Vagina (tissue), 2 donors: ENCODE measurements at regions of chr1 and their contacts with region 1.

Region 1: GRCh38 chr1:59707178-59707791 is 107.5 kb upstream of the HOOK1 start:
- DNase-seq: no peak
- H3K4me3 ChIP-seq: no peak overlapping the region
- H3K27ac ChIP-seq: peak overlapping the region; percentile 82
- H3K4me1 ChIP-seq: peaks cover 49% of the 10 kb centered on the region
- H3K27me3 ChIP-seq: no peaks in the 10 kb centered on the region
- CTCF ChIP-seq: no peak
- POLR2A ChIP-seq: no peak

Region 2: DNA sequence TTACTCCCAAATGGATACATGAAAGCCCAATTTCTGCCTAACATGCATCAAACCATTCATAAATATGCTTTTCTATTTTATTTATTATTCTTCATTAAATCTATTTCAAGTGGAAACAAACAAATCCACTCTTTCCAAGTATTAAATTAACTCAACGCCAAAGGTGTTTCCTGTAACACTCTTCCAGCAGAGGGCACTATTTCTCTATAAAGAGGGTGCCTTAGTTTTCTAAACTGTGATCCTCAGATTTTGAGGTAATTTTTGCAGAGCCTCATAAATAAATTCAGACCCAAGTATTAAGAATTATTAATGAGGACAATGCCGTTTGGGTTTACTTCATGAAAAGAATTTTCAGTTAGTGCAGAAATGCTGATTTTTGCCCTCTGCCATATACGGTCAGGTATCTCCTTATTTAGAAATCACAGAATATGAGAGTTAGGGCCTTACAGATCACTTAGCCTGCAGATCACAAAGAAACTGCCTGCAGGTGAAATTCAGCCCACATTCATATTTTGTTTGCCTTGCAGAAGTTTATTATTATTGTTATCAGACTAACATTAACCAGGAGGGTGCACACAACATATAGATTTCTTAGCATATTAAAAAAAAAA is 967.3 kb before region 1 on chr1:
- intact Hi-C with region 1: loop called (anchors 10 kb)
- DNase-seq: no peak
- H3K4me3 ChIP-seq: no peak overlapping the region
- H3K27ac ChIP-seq: no peak overlapping the region
- H3K4me1 ChIP-seq: no peaks in the 10 kb centered on the region
- H3K27me3 ChIP-seq: no peaks in the 10 kb centered on the region
- CTCF ChIP-seq: peak; percentile 80 to 85 (median 82)
- POLR2A ChIP-seq: no peak

Region 3: DNA sequence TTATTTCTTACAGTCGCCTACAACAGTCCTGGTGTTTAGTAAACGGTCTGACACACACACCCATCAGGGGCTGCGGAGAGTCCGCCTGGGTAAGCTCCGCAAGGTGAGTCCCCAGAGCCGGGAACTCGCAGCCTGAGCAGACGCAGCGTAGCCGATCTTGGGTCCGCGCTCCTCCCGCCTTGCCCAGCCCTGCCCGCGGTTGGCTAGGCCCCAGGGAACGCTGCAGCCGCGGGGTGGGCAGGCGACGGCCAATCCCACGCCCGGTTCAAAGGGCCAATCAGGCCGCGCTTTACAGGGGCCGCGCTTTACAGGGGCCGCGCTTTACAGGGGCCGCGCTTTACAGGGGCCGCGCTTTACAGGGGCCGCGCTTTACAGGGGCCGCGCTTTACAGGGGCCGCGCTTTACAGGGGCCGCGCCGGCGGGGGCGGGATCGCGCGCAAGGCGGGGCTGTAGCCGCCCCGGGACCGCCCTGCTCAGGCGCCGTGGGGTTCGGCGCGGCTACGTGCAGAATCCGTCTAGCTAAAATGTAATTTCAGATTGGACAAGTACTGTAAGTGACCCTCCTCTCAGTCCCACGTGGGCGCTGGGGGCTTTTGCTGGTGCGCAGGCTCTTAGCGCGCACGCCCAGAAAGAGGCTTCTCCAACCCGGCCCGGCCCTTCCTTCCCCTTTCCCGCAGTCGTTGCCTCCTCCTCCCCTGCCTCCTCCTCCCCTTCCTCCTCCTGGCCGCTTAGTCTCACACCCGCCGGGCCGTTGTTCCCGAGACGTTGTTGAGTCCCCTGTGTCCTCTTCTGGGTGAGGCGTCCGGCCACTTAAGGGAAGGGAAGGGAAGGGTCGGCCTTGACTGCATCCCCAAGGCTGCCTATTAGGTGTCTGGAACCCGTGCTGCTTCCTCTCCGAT is 410.7 kb before region 1 on chr1 and contains the start of gene FGGY:
- intact Hi-C with region 1: loop called (anchors 10 kb)
- DNase-seq: peak in 1 of 2 donors; percentile 98
- H3K4me3 ChIP-seq: peak within 1 kb of the TSS; percentile 55 to 64
- H3K27ac ChIP-seq: peak within 1 kb of the TSS; percentile 97
- H3K4me1 ChIP-seq: peaks cover 31% of the 10 kb centered on the region
- H3K27me3 ChIP-seq: no peaks in the 10 kb centered on the region
- CTCF ChIP-seq: no peak
- POLR2A ChIP-seq: peak in 1 of 2 donors; percentile 72
- total RNA-seq, gene FGGY: 11.8 TPM

Region 4: GRCh38 chr1:59759156-59759925 is 52.1 kb after region 1 on chr1:
- intact Hi-C with region 1: loop called (anchors 10 kb)
- DNase-seq: peak in 1 of 2 donors; percentile 94
- H3K4me3 ChIP-seq: no peak overlapping the region
- H3K27ac ChIP-seq: peak overlapping the region; percentile 74
- H3K4me1 ChIP-seq: peaks cover 14% of the 10 kb centered on the region
- H3K27me3 ChIP-seq: no peaks in the 10 kb centered on the region
- CTCF ChIP-seq: peak; percentile 85 to 95 (median 85)
- POLR2A ChIP-seq: no peak

Region 5: GRCh38 chr1:60132985-60133675 is 425.8 kb after region 1 on chr1:
- intact Hi-C with region 1: no loop called
- DNase-seq: no peak
- H3K4me3 ChIP-seq: no peak overlapping the region
- H3K27ac ChIP-seq: no peak overlapping the region
- H3K4me1 ChIP-seq: peaks cover 15% of the 10 kb centered on the region
- H3K27me3 ChIP-seq: no peaks in the 10 kb centered on the region
- CTCF ChIP-seq: no peak
- POLR2A ChIP-seq: no peak